ENCODE measurements at regions of chr5 and their contacts with region 1.

Region 1: GRCh38 chr5:77775790-77776553 is at the start of gene TBCA:
- DNase-seq: peak; percentile 86
- H3K4me3 ChIP-seq: peak within 1 kb of the TSS; percentile 47 to 88 (median 58)
- H3K27ac ChIP-seq: peak within 1 kb of the TSS; percentile 89 to 98 (median 96)
- H3K4me1 ChIP-seq: peaks cover 25 to 29% of the 10 kb centered on the region in 2 donors
- H3K27me3 ChIP-seq: no peaks in the 10 kb centered on the region
- CTCF ChIP-seq: peak in 3 of 6 experiments; percentile 12 to 30 (median 19)
- POLR2A ChIP-seq: peak; percentile 88 to 94
- total RNA-seq, gene TBCA: 127 to 222 (median 165) TPM

Region 2: DNA sequence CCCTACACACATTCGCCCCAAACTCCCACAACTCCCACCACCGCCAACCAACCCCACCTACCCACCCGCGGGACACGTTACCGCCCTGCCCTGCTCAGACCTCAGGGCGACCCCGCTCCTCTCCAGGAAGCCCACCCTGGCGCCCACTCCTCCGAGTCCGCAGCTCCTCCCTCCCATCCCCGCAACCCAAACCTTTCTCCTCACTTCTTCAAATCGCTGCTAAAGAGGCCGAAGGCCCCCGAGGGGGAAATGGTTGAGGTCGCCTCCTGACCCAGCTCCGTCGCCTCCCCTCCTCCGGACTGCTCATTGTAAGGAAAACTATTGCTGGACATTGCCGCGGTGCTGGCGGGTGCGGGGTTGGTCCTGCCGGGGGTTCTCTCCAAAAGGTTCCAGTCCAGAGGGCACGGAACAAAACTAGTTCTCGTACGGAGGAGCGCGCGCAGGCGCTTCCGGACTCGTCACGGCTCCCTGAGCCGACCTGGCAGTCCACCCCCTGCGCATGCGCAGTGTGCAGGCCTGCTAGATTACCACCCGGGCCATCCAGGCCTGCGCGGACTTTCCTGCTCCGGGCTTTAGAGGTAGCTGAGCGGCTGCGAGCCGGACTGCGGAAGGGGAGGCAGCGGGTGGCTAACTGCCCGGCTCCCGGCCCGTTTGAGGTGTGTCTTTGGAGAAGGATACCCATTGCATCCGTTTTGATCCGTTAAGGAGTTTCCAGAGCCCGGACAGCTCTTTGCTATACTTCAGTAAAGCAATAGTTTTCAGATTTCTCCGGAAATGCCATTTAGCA is 518.5 kb after region 1 on chr5 and contains the start of gene AP3B1:
- intact Hi-C with region 1: loop called (anchors 10 kb)
- DNase-seq: peak; percentile 100
- H3K4me3 ChIP-seq: peak within 1 kb of the TSS; percentile 82 to 100 (median 95)
- H3K27ac ChIP-seq: peak within 1 kb of the TSS; percentile 56 to 87 (median 79)
- H3K4me1 ChIP-seq: peaks cover 10 to 15% of the 10 kb centered on the region in 2 donors
- H3K27me3 ChIP-seq: no peaks in the 10 kb centered on the region
- CTCF ChIP-seq: no peak
- POLR2A ChIP-seq: peak; percentile 80 to 90
- total RNA-seq, gene AP3B1: 60.9 to 86.6 (median 72.2) TPM

Measured in thyroid gland (tissue), 4 donors.